ENCODE measurements at regions of chr1 and their contacts with region 1.

Region 1: GRCh38 chr1:39196244-39197215 is 8.0 kb upstream of the MACF1 start:
- DNase-seq: peak; percentile 78
- H3K4me3 Mint-ChIP-seq: peak overlapping the region; percentile 58
- H3K27ac Mint-ChIP-seq: peak overlapping the region; percentile 98
- H3K4me1 Mint-ChIP-seq: peaks cover 72% of the 10 kb centered on the region
- H3K27me3 Mint-ChIP-seq: no peaks in the 10 kb centered on the region

Region 2: GRCh38 chr1:38990738-38991639 is 205.5 kb before region 1 on chr1 and contains the start of gene AKIRIN1:
- CTCF ChIA-PET with region 1: no interaction called
- POLR2A ChIA-PET with region 1: no interaction called
- intact Hi-C with region 1: loop called (anchors 10 kb)
- DNase-seq: peak; percentile 99
- H3K4me3 Mint-ChIP-seq: peak within 1 kb of the TSS; percentile 81
- H3K27ac Mint-ChIP-seq: peak within 1 kb of the TSS; percentile 84
- H3K4me1 Mint-ChIP-seq: peaks cover 48% of the 10 kb centered on the region
- H3K27me3 Mint-ChIP-seq: no peaks in the 10 kb centered on the region
- total RNA-seq, gene AKIRIN1: 73.2 to 74.3 TPM

Region 3: GRCh38 chr1:39063775-39064174 is 132.8 kb before region 1 on chr1:
- CTCF ChIA-PET with region 1: no interaction called
- POLR2A ChIA-PET with region 1: no interaction called
- intact Hi-C with region 1: no loop called
- DNase-seq: no peak
- H3K4me3 Mint-ChIP-seq: no peak overlapping the region
- H3K27ac Mint-ChIP-seq: no peak overlapping the region
- H3K4me1 Mint-ChIP-seq: no peaks in the 10 kb centered on the region
- H3K27me3 Mint-ChIP-seq: no peaks in the 10 kb centered on the region

Region 4: GRCh38 chr1:39214998-39215873 is 18.7 kb after region 1 on chr1:
- CTCF ChIA-PET with region 1: interaction called, 59 read pairs
- POLR2A ChIA-PET with region 1: interaction called, 17 read pairs
- intact Hi-C with region 1: loop called (anchors 1 kb)
- DNase-seq: peak; percentile 65
- H3K4me3 Mint-ChIP-seq: peak overlapping the region; percentile 88
- H3K27ac Mint-ChIP-seq: peak overlapping the region; percentile 88
- H3K4me1 Mint-ChIP-seq: peaks cover 54% of the 10 kb centered on the region
- H3K27me3 Mint-ChIP-seq: no peaks in the 10 kb centered on the region

Region 5: GRCh38 chr1:39238476-39238875 is 41.9 kb after region 1 on chr1:
- CTCF ChIA-PET with region 1: interaction called, 16 read pairs
- POLR2A ChIA-PET with region 1: interaction called, 3 read pairs
- intact Hi-C with region 1: no loop called
- DNase-seq: no peak
- H3K4me3 Mint-ChIP-seq: no peak overlapping the region
- H3K27ac Mint-ChIP-seq: peak overlapping the region; percentile 4
- H3K4me1 Mint-ChIP-seq: peaks cover 49% of the 10 kb centered on the region
- H3K27me3 Mint-ChIP-seq: no peaks in the 10 kb centered on the region

Region 6: GRCh38 chr1:39268112-39268581 is 71.6 kb after region 1 on chr1:
- CTCF ChIA-PET with region 1: interaction called, 320 read pairs
- POLR2A ChIA-PET with region 1: no interaction called
- intact Hi-C with region 1: no loop called
- DNase-seq: peak; percentile 39
- H3K4me3 Mint-ChIP-seq: peak overlapping the region; percentile 64
- H3K27ac Mint-ChIP-seq: peak overlapping the region; percentile 81
- H3K4me1 Mint-ChIP-seq: peaks cover 89% of the 10 kb centered on the region
- H3K27me3 Mint-ChIP-seq: no peaks in the 10 kb centered on the region

Region 7: GRCh38 chr1:39398278-39399021 is 201.9 kb after region 1 on chr1:
- CTCF ChIA-PET with region 1: interaction called, 6 read pairs
- POLR2A ChIA-PET with region 1: interaction called, 3 read pairs
- intact Hi-C with region 1: loop called (anchors 2 kb)
- DNase-seq: peak; percentile 69
- H3K4me3 Mint-ChIP-seq: peak overlapping the region; percentile 32
- H3K27ac Mint-ChIP-seq: peak overlapping the region; percentile 86
- H3K4me1 Mint-ChIP-seq: peaks cover 62% of the 10 kb centered on the region
- H3K27me3 Mint-ChIP-seq: no peaks in the 10 kb centered on the region

Region 8: GRCh38 chr1:40385437-40386358 is 1189.2 kb after region 1 on chr1:
- CTCF ChIA-PET with region 1: no interaction called
- POLR2A ChIA-PET with region 1: interaction called, 3 read pairs
- intact Hi-C with region 1: loop called (anchors 10 kb)
- DNase-seq: peak; percentile 77
- H3K4me3 Mint-ChIP-seq: peak overlapping the region; percentile 81
- H3K27ac Mint-ChIP-seq: peak overlapping the region; percentile 100
- H3K4me1 Mint-ChIP-seq: peaks cover 90% of the 10 kb centered on the region
- H3K27me3 Mint-ChIP-seq: no peaks in the 10 kb centered on the region

Measured in activated CD4-positive, alpha-beta memory T cell treated with anti-CD3 and anti-CD28 coated beads for 36 hours (primary cell).